Cardiac septum (tissue), 1 donor: ENCODE measurements at regions of chr2 and their contacts with region 1.

Region 1: DNA sequence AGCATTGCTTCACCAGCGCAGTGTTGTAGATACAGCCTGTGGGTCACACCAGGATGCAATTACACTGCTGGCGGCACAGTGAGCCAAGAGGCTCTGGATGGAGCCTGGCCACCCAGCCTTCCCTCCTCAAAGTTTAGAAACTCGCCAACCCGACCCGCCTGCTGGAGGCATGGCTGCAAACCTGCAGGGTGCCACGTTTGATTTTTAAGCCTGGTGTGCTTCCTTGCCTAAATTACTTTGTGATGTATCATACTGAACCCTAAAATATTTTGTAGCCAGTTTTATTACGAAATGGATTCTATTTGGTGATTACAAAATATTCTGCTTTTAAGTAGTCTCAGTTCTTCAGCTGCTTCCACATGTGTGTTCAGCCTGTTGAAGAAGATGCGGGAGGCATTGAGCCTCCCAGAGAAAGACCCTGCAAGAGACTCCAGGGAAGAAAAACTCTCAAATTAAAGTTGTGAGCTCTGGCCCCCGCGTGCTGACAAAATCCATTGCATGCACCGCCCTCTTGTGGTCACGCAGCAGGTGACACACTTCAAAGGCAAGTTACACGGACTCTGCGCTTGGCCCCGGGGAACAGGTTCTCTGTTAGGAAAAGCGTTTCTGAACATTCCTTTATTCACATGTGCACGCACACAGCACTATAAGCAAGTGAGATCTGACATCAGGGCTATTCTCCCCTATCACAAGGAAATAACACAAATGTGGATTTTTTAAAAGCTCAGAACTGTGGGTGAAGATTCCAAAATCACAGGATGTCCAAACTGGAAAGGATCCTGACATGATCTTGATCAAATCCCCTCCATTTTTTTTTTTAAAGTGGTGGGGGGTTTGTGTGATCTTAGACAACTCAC is 63.0 kb upstream of the TWIST2 start:
- DNase-seq: no peak

Region 2: DNA sequence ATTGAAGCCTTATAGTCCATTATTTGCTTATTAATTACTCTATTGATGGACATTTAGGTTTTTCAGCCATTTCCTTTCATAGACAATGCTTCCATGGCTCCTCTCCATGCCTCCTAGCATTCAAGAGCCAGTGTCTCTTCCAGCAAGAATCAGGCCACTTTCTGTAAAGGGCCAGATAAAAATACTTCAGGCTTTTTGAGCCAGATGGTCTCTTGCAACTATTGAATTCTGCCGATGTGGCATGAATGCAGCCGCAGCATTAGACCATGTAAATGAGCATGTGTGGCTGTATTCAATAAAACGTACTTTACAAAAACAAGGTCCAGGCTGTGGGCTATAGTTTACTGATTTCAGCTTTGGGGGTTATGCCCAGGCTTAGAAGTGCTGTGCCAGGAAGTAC is 426.1 kb before region 1 on chr2:
- intact Hi-C with region 1: loop called (anchors 5 kb)
- DNase-seq: no peak

Region 3: GRCh38 chr2:238513346-238513745 is 271.6 kb before region 1 on chr2:
- intact Hi-C with region 1: loop called (anchors 2 kb)
- DNase-seq: peak; percentile 67

Region 4: DNA sequence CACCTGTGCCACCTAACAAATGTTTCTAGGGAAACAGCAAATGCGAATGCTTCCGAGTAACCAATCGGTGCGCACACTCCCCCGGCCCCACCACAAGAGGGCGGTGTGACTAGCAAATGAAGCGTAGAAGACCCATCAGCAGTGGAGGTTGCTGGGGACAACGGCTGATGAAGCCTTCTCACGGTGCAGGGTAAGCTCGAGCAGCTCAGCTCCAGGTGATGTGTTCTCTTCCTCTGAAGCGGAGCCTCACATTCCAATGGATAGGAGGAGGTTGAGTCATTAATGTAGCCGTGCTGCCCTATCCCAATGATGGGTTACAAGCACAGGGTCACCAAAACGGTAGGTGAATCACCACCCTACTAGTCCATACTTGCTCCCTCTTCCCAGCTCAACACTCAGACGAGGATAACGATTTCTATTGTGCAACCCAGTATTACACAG is 64.6 kb before region 1 on chr2:
- intact Hi-C with region 1: loop called (anchors 5 kb)
- DNase-seq: no peak

Region 5: GRCh38 chr2:238883421-238883901 is 98.6 kb after region 1 on chr2:
- intact Hi-C with region 1: no loop called
- DNase-seq: no peak

Region 6: GRCh38 chr2:238945433-238946150 is 160.7 kb after region 1 on chr2:
- intact Hi-C with region 1: loop called (anchors 10 kb)
- DNase-seq: peak; percentile 72